Activated CD4-positive, alpha-beta T cell treated with anti-CD3 and anti-CD28 coated beads, Interleukin-2, amount 10 ng/mL, durations not matched to agents 24 days and 14 days (primary cell): ENCODE measurements at regions of chr2 and their contacts with region 1.

Region 1: DNA sequence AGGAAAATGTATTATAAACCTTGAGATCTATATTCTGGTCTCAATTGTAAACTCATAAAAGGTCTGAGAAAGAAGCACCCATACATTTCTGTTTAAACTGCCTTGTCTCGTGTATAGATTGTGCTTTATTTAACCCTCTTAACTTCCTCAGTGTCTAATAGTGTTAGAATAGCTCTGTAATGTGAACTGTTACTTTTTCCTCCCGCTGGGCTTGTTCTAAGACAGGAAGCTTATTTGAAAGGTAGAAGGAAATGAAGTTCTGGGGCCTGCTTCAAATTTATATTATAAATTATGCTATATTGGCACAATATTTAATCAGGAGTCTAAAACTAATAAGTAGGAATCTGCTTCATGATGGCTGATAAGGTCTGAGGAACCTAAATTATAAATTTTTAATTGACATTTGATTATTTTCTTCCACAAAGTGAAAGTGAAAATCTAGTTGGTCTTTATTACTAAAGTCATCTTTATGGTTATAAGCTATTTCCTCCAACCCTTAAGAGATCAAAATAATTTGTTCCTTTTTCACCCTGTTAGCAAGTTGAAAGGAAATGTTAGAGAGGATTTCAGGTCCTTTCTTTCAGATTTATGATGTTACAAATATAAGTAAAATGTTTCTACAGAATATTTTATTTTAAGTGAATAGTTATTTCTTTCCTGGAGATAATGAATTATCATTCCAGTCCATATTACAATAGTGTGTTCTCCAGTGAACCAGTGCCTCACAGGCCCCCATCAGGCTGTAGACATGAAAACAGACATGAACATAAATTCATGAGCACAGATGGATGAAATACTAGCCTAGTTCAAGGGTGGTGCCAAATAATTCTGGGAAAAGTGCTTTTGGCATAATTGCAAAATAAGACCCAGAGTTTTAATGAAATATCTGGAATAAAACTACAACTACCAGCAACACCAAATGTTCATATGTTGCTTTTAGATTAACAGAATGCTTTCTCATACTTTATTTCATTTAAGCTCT is 7.9 kb downstream of the MFSD6 start:
- DNase-seq: peak; percentile 57
- H3K4me3 Mint-ChIP-seq: peak overlapping the region; percentile 62
- H3K27ac Mint-ChIP-seq: peak overlapping the region; percentile 56
- H3K4me1 Mint-ChIP-seq: peaks cover 33% of the 10 kb centered on the region
- H3K27me3 Mint-ChIP-seq: no peaks in the 10 kb centered on the region

Region 2: GRCh38 chr2:190432567-190433231 is 16.6 kb after region 1 on chr2:
- intact Hi-C with region 1: loop called (anchors 2 kb)
- DNase-seq: no peak
- H3K4me3 Mint-ChIP-seq: peak overlapping the region; percentile 0
- H3K27ac Mint-ChIP-seq: no peak overlapping the region
- H3K4me1 Mint-ChIP-seq: peaks cover 43% of the 10 kb centered on the region
- H3K27me3 Mint-ChIP-seq: no peaks in the 10 kb centered on the region